Heart left ventricle (tissue), 16 donors: ENCODE measurements at regions of chr9 and their contacts with region 1.

Region 1: DNA sequence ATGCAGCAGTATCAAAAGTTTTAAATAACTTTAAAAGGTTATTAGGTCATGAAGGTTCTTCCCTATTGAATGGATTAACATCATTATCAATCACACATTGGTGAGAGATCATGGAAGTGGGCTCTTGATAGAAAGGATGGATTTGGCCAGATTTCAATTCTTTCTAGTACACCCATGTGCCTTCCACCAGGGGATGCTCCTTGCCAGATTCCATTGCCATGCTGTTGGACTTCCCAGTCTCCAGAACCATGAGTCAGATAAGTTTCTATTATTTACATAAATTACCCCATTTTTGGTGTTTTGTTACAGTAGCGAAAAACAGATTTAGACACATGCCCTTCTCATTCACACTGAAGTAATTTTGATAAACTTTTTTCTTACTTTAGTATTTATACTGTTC is 1010.6 kb upstream of the C9orf72 start:
- DNase-seq: no peak
- ATAC-seq: no peak
- H3K4me3 ChIP-seq: no peak overlapping the region
- H3K27ac ChIP-seq: no peak overlapping the region
- H3K4me1 ChIP-seq: no peaks in the 10 kb centered on the region
- H3K27me3 ChIP-seq: no peaks in the 10 kb centered on the region
- CTCF ChIP-seq: no peak
- POLR2A ChIP-seq: no peak

Region 2: GRCh38 chr9:28487561-28487960 is 96.3 kb before region 1 on chr9:
- intact Hi-C with region 1: no loop called
- DNase-seq: no peak
- ATAC-seq: no peak
- H3K4me3 ChIP-seq: no peak overlapping the region
- H3K27ac ChIP-seq: no peak overlapping the region
- H3K4me1 ChIP-seq: no peaks in the 10 kb centered on the region
- H3K27me3 ChIP-seq: no peaks in the 10 kb centered on the region
- CTCF ChIP-seq: no peak
- POLR2A ChIP-seq: no peak

Region 3: GRCh38 chr9:28518439-28518838 is 65.4 kb before region 1 on chr9:
- intact Hi-C with region 1: loop called in 1 of 10 experiments (anchors 10 kb)
- DNase-seq: no peak
- ATAC-seq: no peak
- H3K4me3 ChIP-seq: no peak overlapping the region
- H3K27ac ChIP-seq: no peak overlapping the region
- H3K4me1 ChIP-seq: no peaks in the 10 kb centered on the region
- H3K27me3 ChIP-seq: no peaks in the 10 kb centered on the region
- CTCF ChIP-seq: no peak
- POLR2A ChIP-seq: no peak

Region 4: GRCh38 chr9:28668158-28668557 is 84.3 kb after region 1 on chr9:
- intact Hi-C with region 1: no loop called
- DNase-seq: no peak
- ATAC-seq: no peak
- H3K4me3 ChIP-seq: no peak overlapping the region
- H3K27ac ChIP-seq: no peak overlapping the region
- H3K4me1 ChIP-seq: no peaks in the 10 kb centered on the region
- H3K27me3 ChIP-seq: no peaks in the 10 kb centered on the region
- CTCF ChIP-seq: no peak
- POLR2A ChIP-seq: no peak